ENCODE measurements at regions of chr1 and their contacts with region 1.

Region 1: DNA sequence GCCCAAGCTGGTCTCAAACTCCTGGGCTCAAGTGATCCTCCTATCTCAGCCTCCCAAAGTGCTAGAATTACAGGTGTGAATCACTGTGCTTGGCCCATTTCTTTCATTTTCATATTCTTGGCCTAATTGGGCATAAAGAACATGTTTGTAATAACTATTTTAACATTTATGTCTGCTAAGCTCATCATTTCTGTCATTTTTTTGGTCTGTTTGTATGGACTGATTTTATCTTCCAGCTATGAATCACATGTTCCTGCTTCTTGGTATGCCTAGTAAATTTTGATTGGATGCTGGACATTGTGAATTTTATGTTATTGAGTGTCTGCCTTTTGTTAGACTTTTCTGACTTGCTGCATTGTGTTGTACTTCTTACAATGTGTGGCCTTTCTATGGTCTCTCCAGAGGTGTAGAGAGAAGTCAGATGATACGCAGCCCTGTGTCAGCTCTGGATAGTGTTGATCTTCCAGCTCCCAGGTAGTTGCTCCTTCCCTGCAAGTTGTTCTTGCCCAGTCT is 39.0 kb upstream of the PPM1J start:
- DNase-seq: no peak
- ATAC-seq: no peak
- H3K4me3 ChIP-seq: no peak overlapping the region
- H3K27ac ChIP-seq: no peak overlapping the region
- H3K4me1 ChIP-seq: no peaks in the 10 kb centered on the region
- H3K27me3 ChIP-seq: no peaks in the 10 kb centered on the region; a peak in 2 of 5 replicates
- CTCF ChIP-seq: no peak
- EP300 ChIP-seq: no peak
- POLR2A ChIP-seq: no peak
- RAD21 ChIP-seq: no peak

Region 2: GRCh38 chr1:112790920-112791722 is 36.9 kb after region 1 on chr1:
- CTCF ChIA-PET with region 1: no interaction called
- POLR2A ChIA-PET with region 1: no interaction called
- in situ Hi-C with region 1: no loop called
- intact Hi-C with region 1: loop called (anchors 2 kb)
- DNase-seq: no peak
- ATAC-seq: no peak
- H3K4me3 ChIP-seq: no peak overlapping the region
- H3K27ac ChIP-seq: no peak overlapping the region
- H3K4me1 ChIP-seq: peaks cover 27% of the 10 kb centered on the region; the same call in 1 of the 2 replicates
- H3K27me3 ChIP-seq: peaks cover 1 to 6% of the 10 kb centered on the region in 2 experiments; a peak in 1 of 5 replicates
- CTCF ChIP-seq: no peak
- EP300 ChIP-seq: no peak
- POLR2A ChIP-seq: no peak
- RAD21 ChIP-seq: no peak

Measured in HepG2 (cell line).